Thyroid gland (tissue), 4 donors: ENCODE measurements at regions of chr16 and their contacts with region 1.

Region 1: GRCh38 chr16:2682209-2683021 is at the start of gene KCTD5:
- DNase-seq: peak; percentile 96 to 97
- H3K4me3 ChIP-seq: peak within 1 kb of the TSS; percentile 82 to 84 (median 83)
- H3K27ac ChIP-seq: peak within 1 kb of the TSS in 2 of 3 donors; percentile 38 to 62
- H3K4me1 ChIP-seq: peaks cover 11 to 13% of the 10 kb centered on the region in 2 donors
- H3K27me3 ChIP-seq: no peaks in the 10 kb centered on the region
- CTCF ChIP-seq: no peak
- POLR2A ChIP-seq: peak in 1 of 2 donors; percentile 98
- total RNA-seq, gene KCTD5: 8.6 to 23.3 (median 15.1) TPM

Region 2: DNA sequence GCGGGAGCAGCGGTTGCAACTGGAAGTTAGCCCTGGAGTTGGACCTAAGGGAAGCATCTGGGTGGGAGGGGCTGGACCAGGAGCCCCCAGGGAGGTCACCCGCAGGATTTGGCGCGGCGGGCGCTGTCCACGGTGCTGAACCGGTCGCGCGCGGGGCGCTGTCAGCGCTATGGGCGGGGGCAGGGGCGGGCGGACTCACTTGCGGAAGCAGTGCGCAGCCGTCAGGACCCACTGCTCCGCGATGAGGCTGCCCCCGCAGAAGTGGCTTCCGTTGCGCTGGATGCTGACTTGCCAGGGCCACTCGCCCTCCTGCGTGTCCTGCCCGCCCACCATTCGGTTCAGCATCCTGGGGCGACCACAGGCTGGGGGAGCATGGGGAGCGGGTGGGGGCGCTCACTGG is 33.1 kb after region 1 on chr16:
- intact Hi-C with region 1: loop called (anchors 5 kb)
- DNase-seq: peak; percentile 53 to 55
- H3K4me3 ChIP-seq: no peak overlapping the region
- H3K27ac ChIP-seq: no peak overlapping the region
- H3K4me1 ChIP-seq: peaks cover 3 to 22% of the 10 kb centered on the region in 2 donors
- H3K27me3 ChIP-seq: no peaks in the 10 kb centered on the region
- CTCF ChIP-seq: no peak
- POLR2A ChIP-seq: no peak